A673 (cell line): ENCODE measurements at regions of chr1 and their contacts with region 1.

Region 1: DNA sequence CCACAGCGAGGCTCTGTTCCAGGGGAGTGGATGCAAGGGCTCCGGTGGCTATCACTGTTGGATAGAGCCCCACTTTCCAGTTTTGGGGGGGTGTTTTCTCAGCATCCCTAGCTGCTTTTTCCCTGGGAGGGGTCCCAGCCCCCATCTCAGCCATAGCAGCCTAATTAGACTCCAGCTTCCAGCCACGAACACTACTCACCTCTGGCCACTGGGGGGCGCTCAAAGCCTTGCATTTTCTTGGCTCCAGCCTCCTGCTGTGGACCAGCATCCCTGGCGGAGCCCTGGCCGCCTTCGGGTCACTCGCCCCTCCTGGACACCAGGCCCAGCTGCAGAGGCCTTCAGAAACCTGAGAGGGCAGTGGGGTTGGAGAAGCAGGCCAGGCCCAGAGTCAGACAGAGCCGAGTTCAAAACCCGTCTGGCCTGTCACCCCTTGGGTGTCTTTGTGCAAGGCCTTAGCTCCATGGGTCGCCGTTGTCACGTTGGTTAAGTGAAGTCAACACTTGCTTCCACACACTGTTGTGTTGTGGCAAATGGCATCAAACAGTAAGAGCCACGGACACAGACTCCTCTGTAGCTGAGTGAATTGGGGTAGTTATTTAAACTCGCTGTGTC is 93.5 kb upstream of the ACTL8 start:
- DNase-seq: peak; percentile 58
- H3K4me3 ChIP-seq: no peak overlapping the region
- H3K27ac ChIP-seq: no peak overlapping the region
- H3K4me1 ChIP-seq: no peaks in the 10 kb centered on the region
- H3K27me3 ChIP-seq: no peaks in the 10 kb centered on the region
- CTCF ChIP-seq: peak; percentile 92

Region 2: GRCh38 chr1:17648457-17649145 is 13.1 kb before region 1 on chr1:
- CTCF ChIA-PET with region 1: no interaction called
- POLR2A ChIA-PET with region 1: no interaction called
- intact Hi-C with region 1: no loop called
- DNase-seq: no peak
- H3K4me3 ChIP-seq: no peak overlapping the region
- H3K27ac ChIP-seq: no peak overlapping the region
- H3K4me1 ChIP-seq: no peaks in the 10 kb centered on the region
- H3K27me3 ChIP-seq: no peaks in the 10 kb centered on the region
- CTCF ChIP-seq: no peak

Region 3: DNA sequence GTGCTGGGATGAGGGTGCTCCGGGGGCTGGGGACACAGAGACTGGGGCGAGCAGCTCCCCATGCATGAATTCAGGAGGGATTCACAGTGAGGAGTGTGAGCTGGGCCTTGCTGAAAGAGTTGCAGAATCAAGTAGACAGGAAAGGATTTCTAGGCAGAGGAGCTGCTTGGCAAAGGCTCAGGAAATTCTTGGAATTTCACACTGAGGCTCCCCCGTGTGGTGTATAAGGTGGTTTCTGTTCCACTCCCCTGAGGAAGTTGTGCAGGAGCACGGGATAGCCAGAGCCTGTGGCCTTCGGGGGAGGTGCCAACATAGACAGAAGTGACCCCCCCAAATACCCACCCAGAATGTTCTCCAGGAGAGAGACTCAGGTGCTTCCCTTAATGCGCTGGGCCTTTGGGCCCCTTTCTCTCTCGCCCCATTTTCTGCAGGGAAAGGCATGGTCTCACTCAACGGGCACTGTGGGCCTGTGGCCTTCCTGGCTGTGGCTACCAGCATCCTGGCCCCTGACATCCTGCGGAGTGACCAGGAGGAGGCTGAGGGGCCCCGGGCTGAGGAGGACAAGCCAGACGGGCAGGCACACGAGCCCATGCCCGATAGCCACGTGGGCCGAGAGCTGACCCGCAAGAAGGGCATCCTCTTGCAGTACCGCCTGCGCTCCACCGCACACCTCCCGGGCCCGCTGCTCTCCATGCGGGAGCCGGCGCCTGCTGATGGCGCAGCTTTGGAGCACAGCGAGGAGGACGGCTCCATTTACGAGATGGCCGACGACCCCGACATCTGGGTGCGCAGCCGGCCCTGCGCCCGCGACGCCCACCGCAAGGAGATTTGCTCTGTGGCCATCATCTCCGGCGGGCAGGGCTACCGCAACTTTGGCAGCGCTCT is 35.0 kb after region 1 on chr1:
- CTCF ChIA-PET with region 1: interaction called, 16 read pairs
- POLR2A ChIA-PET with region 1: no interaction called
- intact Hi-C with region 1: no loop called
- DNase-seq: peak; percentile 79
- H3K4me3 ChIP-seq: no peak overlapping the region
- H3K27ac ChIP-seq: no peak overlapping the region
- H3K4me1 ChIP-seq: peaks cover 8% of the 10 kb centered on the region
- H3K27me3 ChIP-seq: no peaks in the 10 kb centered on the region
- CTCF ChIP-seq: peak; percentile 67

Region 4: DNA sequence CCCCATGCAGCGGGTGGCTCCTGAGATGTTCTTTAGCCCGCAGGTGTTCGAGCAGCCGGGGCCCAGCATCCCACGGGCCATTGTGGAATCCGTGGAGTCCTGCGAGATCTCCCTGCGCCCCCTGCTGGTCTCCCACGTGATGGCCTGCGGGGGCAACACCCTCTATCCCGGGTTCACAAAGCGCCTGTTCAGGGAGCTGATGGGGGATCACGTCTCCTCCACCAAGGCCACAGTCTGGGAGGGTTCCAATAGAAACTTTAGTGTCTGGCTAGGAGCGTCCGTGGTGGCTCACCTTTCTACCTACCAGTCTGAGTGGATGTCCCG is 164.5 kb after region 1 on chr1:
- CTCF ChIA-PET with region 1: interaction called, 6 read pairs
- POLR2A ChIA-PET with region 1: no interaction called
- intact Hi-C with region 1: loop called (anchors 2 kb)
- DNase-seq: peak; percentile 61
- H3K4me3 ChIP-seq: no peak overlapping the region
- H3K27ac ChIP-seq: no peak overlapping the region
- H3K4me1 ChIP-seq: no peaks in the 10 kb centered on the region
- H3K27me3 ChIP-seq: no peaks in the 10 kb centered on the region
- CTCF ChIP-seq: peak; percentile 78

Region 5: DNA sequence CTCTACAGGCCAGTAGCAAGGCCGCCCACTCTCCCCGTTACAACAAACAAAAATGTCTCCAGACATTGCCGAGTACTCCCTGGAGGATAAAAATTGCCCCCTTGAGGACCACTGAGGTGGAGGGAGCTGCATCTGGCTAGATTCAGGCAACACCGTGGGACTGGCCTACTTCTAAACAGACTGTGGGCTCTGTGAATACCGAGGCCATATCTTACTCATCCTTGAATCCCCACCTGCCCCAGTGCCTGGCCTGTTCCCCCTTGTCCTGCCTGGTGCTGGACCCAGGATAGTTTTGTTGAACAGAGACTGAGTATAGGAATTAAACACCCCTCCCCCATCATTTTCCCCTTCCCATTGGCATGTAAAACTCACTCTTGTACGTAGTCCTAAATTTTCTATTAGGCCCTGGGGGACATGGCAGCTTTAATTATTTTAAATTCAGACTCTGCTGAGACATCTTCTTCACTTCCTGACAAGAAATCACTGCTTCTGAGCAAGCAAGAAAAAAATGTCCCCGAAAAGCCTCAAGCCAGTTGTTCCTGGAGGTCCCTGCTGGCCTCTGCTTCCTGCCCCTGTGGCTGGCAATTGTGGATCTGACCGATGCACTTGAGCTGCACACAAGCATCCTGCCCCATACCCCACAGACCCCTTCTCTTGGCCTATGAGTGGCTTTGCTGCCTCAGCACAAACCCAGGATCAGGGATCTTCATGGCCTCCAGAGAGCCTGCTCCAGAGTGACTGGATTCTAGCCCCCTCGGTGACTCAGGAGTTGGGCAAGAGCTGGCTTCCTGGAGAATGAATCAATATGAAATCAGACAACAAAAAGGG is 204.5 kb after region 1 on chr1:
- CTCF ChIA-PET with region 1: no interaction called
- POLR2A ChIA-PET with region 1: no interaction called
- intact Hi-C with region 1: no loop called
- DNase-seq: peak; percentile 27
- H3K4me3 ChIP-seq: no peak overlapping the region
- H3K27ac ChIP-seq: no peak overlapping the region
- H3K4me1 ChIP-seq: peaks cover 3% of the 10 kb centered on the region
- H3K27me3 ChIP-seq: no peaks in the 10 kb centered on the region
- CTCF ChIP-seq: no peak

Region 6: GRCh38 chr1:18100491-18101063 is 438.9 kb after region 1 on chr1:
- CTCF ChIA-PET with region 1: interaction called, 3 read pairs
- POLR2A ChIA-PET with region 1: no interaction called
- intact Hi-C with region 1: loop called (anchors 5 kb)
- DNase-seq: peak; percentile 75
- H3K4me3 ChIP-seq: no peak overlapping the region
- H3K27ac ChIP-seq: no peak overlapping the region
- H3K4me1 ChIP-seq: no peaks in the 10 kb centered on the region
- H3K27me3 ChIP-seq: no peaks in the 10 kb centered on the region
- CTCF ChIP-seq: peak; percentile 90

Region 7: DNA sequence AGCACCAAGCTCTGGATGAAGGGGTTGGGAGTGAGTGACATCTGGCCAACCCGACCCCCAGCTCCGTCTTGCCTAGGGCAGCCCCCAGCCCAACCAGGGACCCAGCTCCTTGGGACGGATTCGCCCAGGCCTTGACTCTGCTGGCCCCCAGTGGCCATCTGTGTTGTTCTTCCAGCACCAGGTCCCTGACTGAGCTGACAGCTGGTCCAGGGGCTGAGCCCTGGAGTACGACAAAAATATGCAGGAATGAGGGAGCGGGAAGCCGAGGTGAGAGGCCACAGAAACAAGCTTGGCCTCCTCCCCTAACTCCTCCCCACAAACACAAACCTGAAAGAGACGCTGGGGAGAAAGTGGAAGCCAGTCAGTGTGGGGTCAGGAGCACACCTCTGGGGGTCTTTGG is 914.0 kb after region 1 on chr1:
- CTCF ChIA-PET with region 1: interaction called, 8 read pairs
- POLR2A ChIA-PET with region 1: no interaction called
- intact Hi-C with region 1: loop called (anchors 2 kb)
- DNase-seq: peak; percentile 79
- H3K4me3 ChIP-seq: no peak overlapping the region
- H3K27ac ChIP-seq: no peak overlapping the region
- H3K4me1 ChIP-seq: no peaks in the 10 kb centered on the region
- H3K27me3 ChIP-seq: no peaks in the 10 kb centered on the region
- CTCF ChIP-seq: peak; percentile 92